Activated naive CD4-positive, alpha-beta T cell treated with anti-CD3 and anti-CD28 coated beads for 36 hours (primary cell): ENCODE measurements at regions of chr16 and their contacts with region 1.

Region 1: DNA sequence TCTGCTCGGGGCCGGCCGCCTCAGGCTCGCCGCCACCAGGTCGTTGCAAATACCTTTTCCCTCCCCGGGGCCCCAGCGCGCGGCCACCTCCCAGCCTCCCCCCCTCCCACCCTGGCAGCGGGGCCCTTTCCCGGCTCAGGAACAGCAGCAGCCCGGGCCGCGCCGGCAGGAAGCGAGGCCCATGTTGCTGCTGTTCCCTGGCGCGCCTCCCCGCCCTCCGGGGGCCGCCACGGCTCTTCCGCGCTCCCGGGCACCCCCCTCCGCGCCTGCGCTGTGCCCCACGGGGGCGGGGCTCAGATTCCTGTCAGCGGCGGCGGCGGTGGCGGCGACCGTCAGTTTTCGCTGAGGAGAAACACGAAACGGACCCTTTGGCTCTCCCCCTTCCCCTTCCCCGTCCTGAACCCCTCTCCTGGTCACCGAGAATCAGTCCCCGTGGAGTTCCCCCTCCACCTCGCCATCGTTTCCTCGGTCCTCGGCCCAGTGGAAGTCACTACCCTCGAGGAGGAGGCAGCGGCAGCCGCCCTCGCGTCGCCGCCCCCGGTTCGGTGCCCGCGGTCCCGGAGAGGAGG is at the start of gene NFAT5:
- DNase-seq: peak; percentile 89
- H3K4me3 Mint-ChIP-seq: peak within 1 kb of the TSS; percentile 98
- H3K27ac Mint-ChIP-seq: peak within 1 kb of the TSS; percentile 100
- H3K4me1 Mint-ChIP-seq: peaks cover 50% of the 10 kb centered on the region
- H3K27me3 Mint-ChIP-seq: no peaks in the 10 kb centered on the region
- total RNA-seq, gene NFAT5: 33.0 to 34.0 TPM

Region 2: GRCh38 chr16:69166221-69166833 is 399.4 kb before region 1 on chr16:
- CTCF ChIA-PET with region 1: no interaction called
- intact Hi-C with region 1: loop called (anchors 1 kb)
- DNase-seq: peak; percentile 88
- H3K4me3 Mint-ChIP-seq: peak overlapping the region; percentile 23
- H3K27ac Mint-ChIP-seq: peak overlapping the region; percentile 75
- H3K4me1 Mint-ChIP-seq: peaks cover 46% of the 10 kb centered on the region
- H3K27me3 Mint-ChIP-seq: no peaks in the 10 kb centered on the region

Region 3: DNA sequence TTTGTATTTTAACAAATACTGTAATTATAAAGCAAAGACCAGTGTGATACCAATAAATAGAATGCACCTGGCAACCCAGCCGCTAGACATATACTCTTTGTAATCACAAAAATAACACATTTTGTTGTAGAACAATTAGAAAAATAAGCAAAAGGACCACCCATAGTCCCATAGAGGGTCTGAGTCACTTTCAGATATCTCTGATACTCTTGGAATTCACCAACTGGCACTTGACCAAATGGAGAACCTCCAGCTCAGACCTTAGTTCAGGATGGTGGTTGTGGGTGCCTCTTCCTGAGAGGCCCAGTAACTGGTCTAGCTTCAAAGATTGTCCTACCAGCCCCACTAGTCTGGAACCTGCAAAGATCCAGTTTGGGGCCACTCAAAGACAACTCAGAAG is 179.2 kb before region 1 on chr16:
- CTCF ChIA-PET with region 1: no interaction called
- intact Hi-C with region 1: loop called (anchors 1 kb)
- DNase-seq: no peak
- H3K4me3 Mint-ChIP-seq: peak overlapping the region; percentile 97
- H3K27ac Mint-ChIP-seq: peak overlapping the region; percentile 92
- H3K4me1 Mint-ChIP-seq: peaks cover 29% of the 10 kb centered on the region
- H3K27me3 Mint-ChIP-seq: no peaks in the 10 kb centered on the region

Region 4: DNA sequence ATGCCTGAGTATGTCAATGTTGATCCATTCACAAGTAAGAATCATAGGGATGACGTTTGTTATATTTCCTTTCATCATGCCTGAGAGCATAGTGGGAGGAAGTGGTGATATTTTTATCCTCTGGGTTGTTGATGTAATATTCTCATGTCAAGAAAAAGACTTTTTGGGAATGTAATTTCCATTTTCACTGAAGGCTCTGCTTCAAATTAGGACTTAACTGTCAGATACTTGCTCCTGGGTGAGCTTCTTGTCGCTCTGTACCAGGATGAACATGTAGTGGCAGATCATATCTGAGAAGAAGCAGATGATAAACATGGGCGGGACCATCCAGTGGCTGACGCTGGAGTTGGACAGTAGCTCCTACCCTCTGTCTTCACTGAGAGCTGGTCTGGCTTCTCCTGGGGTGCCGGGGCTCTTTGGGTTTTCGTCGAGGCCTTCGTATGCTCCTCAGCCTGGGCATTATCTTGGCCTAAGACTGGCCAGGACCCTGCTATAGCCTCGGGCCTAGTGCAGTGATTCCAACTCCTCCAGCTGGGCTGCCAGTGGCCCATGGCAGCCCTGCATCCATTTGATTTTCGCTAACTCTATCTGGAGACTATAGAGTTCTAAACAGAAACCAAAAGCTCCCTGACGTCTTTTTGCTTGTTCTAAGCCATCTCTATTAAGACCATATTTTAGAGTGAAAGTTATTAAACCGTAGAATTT is 121.7 kb before region 1 on chr16:
- CTCF ChIA-PET with region 1: interaction called, 3 read pairs
- intact Hi-C with region 1: loop called (anchors 1 kb)
- DNase-seq: peak; percentile 26
- H3K4me3 Mint-ChIP-seq: peak overlapping the region; percentile 66
- H3K27ac Mint-ChIP-seq: peak overlapping the region; percentile 89
- H3K4me1 Mint-ChIP-seq: peaks cover 43% of the 10 kb centered on the region
- H3K27me3 Mint-ChIP-seq: no peaks in the 10 kb centered on the region

Region 5: GRCh38 chr16:69535123-69536050 is 30.4 kb before region 1 on chr16:
- CTCF ChIA-PET with region 1: interaction called, 6 read pairs
- intact Hi-C with region 1: loop called (anchors 1 kb)
- DNase-seq: no peak
- H3K4me3 Mint-ChIP-seq: no peak overlapping the region
- H3K27ac Mint-ChIP-seq: no peak overlapping the region
- H3K4me1 Mint-ChIP-seq: peaks cover 26% of the 10 kb centered on the region
- H3K27me3 Mint-ChIP-seq: no peaks in the 10 kb centered on the region

Region 6: GRCh38 chr16:69726296-69727060 is 160.7 kb after region 1 on chr16 and contains the start of gene NQO1:
- CTCF ChIA-PET with region 1: no interaction called
- intact Hi-C with region 1: loop called (anchors 1 kb)
- DNase-seq: peak; percentile 95
- H3K4me3 Mint-ChIP-seq: peak within 1 kb of the TSS; percentile 99
- H3K27ac Mint-ChIP-seq: peak within 1 kb of the TSS; percentile 92
- H3K4me1 Mint-ChIP-seq: peaks cover 27% of the 10 kb centered on the region
- H3K27me3 Mint-ChIP-seq: no peaks in the 10 kb centered on the region
- total RNA-seq, gene NQO1: 11.6 to 11.9 TPM

Region 7: DNA sequence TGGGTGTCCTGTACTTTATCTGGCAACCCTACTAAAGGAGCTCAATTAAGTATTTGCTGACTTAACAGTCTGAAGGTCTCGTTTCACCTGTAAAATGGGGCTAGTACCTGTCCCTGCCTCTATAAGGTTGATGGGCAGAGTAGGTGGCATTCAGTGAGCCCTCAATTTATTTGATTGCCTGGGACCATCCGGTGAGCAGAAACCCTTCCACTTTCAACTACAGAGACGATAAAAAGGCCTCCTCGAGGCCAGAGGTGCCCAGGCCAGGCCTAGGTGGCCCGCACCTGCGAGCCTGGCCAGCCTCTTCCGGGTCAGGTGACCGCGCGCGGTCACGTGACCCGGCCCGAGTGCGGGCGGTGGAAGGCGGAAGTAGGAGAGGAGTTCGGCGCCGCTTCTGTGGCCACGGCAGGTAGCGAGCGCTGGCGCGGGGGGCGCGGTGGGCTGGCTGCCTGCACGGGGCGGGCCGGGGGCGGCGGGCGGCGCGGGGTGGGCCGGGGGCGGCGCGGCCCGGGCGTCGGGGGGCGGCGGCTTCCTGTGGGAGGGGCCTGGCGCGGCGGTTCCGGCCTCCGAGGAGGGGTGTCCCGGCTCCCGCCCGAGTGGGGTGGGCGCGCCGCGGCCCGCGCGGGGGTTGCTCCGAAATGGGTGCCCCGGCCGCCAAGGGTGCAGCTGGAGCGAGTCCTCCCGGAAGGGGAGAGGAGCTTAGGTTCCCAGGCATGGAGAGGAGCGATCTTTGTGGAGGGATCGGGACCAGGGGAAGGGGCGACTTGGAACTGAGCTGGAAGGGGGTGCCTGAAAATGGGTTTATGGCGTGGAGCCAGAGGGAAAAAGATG is 196.4 kb after region 1 on chr16 and contains the start of gene WWP2:
- CTCF ChIA-PET with region 1: no interaction called
- intact Hi-C with region 1: no loop called
- DNase-seq: peak; percentile 78
- H3K4me3 Mint-ChIP-seq: peak within 1 kb of the TSS; percentile 97
- H3K27ac Mint-ChIP-seq: peak within 1 kb of the TSS; percentile 93
- H3K4me1 Mint-ChIP-seq: peaks cover 33% of the 10 kb centered on the region
- H3K27me3 Mint-ChIP-seq: no peaks in the 10 kb centered on the region
- total RNA-seq, gene WWP2: 27.7 to 32.3 TPM